ENCODE measurements at regions of chr10 and their contacts with region 1.

Region 1: GRCh38 chr10:29735596-29736318 is 101.0 kb upstream of the SVIL start:
- DNase-seq: peak in 1 of 2 donors; percentile 95
- H3K4me3 ChIP-seq: peak overlapping the region; percentile 77 to 80
- H3K27ac ChIP-seq: peak overlapping the region; percentile 99
- H3K4me1 ChIP-seq: peaks cover 44% of the 10 kb centered on the region
- H3K27me3 ChIP-seq: no peaks in the 10 kb centered on the region
- CTCF ChIP-seq: peak; percentile 45 to 93 (median 83)
- POLR2A ChIP-seq: peak in 1 of 2 donors; percentile 61

Region 2: DNA sequence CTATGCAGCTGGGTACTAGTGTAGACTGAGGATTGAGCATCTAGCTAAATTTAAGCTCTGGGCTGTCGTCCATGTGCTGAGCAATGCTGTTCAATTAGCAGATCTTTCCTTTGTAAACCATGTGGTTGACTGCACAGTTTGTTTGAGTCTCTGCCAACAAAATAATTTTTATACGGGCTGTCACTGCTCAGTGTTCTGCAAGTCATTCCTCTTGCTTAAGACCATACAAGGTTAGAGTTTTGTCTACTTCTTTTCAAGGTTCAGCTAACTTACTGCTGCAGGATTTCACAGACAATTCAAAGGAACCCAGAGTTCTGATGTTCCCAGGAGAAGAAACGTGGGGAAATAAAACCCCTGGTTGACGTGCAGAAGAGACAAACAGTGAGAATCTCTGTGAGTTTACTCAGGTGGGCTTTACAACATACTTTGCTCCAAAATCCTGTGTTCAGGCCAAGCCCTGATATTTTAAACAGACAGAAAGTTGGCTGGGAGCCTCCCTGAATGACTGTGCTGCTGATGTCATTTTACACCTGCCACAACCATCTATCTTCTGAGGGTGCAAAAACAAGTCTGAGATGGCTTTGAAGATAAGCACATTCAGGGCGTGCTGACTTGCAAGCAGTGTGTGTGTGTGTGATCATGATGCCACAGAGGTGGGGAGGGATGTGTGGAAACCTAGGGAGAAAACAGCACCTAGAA is 76.1 kb after region 1 on chr10:
- intact Hi-C with region 1: loop called (anchors 10 kb)
- DNase-seq: no peak
- H3K4me3 ChIP-seq: no peak overlapping the region
- H3K27ac ChIP-seq: peak overlapping the region; percentile 67
- H3K4me1 ChIP-seq: peaks cover 20% of the 10 kb centered on the region
- H3K27me3 ChIP-seq: no peaks in the 10 kb centered on the region
- CTCF ChIP-seq: no peak
- POLR2A ChIP-seq: no peak

Measured in vagina (tissue), 2 donors.